Adrenal gland (tissue), 19 donors: ENCODE measurements at regions of chr5 and their contacts with region 1.

Region 1: DNA sequence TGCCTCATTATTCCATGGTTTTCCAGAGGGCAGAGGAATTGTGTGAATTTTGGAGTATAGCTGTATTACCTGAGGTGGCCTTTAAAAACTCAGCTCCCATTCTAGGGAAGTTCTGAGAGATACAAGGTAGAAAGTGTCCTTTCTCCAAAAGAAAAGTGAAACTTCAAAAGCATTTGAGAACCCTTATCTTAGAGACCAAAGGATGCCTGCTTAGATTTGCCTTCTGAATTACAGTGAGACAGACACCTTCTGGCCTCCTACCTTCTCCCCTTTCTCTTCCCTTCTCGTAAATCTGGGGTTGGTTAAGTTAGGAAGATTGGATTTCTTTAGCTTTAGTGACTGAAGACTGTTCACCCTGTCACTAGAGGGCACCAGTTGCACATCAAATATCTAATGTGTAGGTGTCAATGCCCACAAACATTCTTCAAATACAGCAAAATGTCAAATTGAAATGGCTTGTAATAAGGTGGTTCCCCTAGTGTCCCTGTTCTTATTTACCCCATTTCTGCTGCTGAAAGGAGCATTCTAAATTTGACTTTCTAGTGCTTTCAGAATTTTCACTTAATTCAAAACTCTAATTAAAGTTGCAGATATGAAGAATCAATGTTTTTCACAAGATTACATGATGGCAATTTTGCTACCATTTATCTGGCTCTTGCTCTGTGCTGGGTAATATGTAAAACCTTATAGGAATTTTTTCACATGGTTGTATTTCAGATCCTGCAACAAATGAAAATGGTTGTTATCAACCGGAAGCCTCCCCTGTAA is 46.7 kb downstream of the PRRC1 start:
- DNase-seq: peak; percentile 17 to 63 (median 52)
- H3K4me3 ChIP-seq: no peak overlapping the region
- H3K27ac ChIP-seq: no peak overlapping the region
- H3K4me1 ChIP-seq: no peaks in the 10 kb centered on the region
- H3K27me3 ChIP-seq: no peaks in the 10 kb centered on the region
- CTCF ChIP-seq: peak; percentile 21 to 82 (median 74)
- POLR2A ChIP-seq: no peak

Region 2: DNA sequence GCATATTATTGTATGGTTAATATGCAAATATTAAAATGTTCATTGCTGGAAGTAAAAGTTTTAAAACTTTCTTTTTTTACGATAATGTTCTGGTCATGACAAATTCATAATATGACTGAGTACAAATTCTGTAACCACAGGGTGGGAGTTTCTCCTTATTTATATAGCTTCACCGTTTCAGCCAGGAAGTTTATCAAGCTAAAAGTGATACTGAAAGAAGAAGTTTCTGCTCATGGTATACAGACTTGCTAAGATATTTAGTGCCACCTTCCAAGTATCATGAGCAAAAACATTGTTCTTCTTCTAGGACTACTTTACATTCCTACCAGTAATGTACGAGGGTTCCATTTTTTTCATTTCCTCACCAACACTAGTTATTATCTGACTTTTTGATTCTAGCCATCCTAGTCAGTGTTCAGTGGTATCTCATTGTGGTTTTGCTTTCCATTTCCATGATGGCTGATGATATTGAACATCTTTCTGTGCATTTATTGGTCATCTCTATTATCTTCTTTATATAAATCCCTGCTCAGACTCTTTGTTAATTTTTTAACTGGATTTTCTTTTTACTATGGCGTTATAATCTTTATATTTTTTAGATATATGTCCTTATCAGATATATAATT is 140.9 kb before region 1 on chr5:
- intact Hi-C with region 1: no loop called
- DNase-seq: no peak
- H3K4me3 ChIP-seq: no peak overlapping the region
- H3K27ac ChIP-seq: no peak overlapping the region
- H3K4me1 ChIP-seq: no peaks in the 10 kb centered on the region
- H3K27me3 ChIP-seq: no peaks in the 10 kb centered on the region
- CTCF ChIP-seq: no peak
- POLR2A ChIP-seq: no peak

Region 3: GRCh38 chr5:127723572-127723971 is 159.4 kb after region 1 on chr5:
- intact Hi-C with region 1: loop called in 1 of 2 experiments (anchors 10 kb)
- DNase-seq: peak; percentile 26 to 78 (median 58)
- H3K4me3 ChIP-seq: no peak overlapping the region
- H3K27ac ChIP-seq: no peak overlapping the region
- H3K4me1 ChIP-seq: peaks cover 4 to 8% of the 10 kb centered on the region in 2 donors
- H3K27me3 ChIP-seq: no peaks in the 10 kb centered on the region
- CTCF ChIP-seq: no peak
- POLR2A ChIP-seq: no peak